ENCODE measurements at regions of chrX and their contacts with region 1.

Region 1: GRCh38 chrX:30981968-30982367 is 89.9 kb downstream of the FTHL17 start:
- DNase-seq: peak in 1 of 3 donors; percentile 35
- H3K4me3 ChIP-seq: no peak overlapping the region
- H3K4me3 Mint-ChIP-seq: peak overlapping the region; percentile 7 to 36
- H3K27ac ChIP-seq: no peak overlapping the region
- H3K27ac Mint-ChIP-seq: peak overlapping the region in 5 of 7 donors; percentile 5 to 79 (median 51)
- H3K4me1 ChIP-seq: peaks cover 10 to 19% of the 10 kb centered on the region in 2 donors
- H3K4me1 Mint-ChIP-seq: peaks cover 13% of the 10 kb centered on the region
- H3K27me3 ChIP-seq: no peaks in the 10 kb centered on the region
- H3K27me3 Mint-ChIP-seq: peaks cover 0 to 3% (median 3%) of the 10 kb centered on the region in 3 donors
- CTCF ChIP-seq: no peak

Region 2: DNA sequence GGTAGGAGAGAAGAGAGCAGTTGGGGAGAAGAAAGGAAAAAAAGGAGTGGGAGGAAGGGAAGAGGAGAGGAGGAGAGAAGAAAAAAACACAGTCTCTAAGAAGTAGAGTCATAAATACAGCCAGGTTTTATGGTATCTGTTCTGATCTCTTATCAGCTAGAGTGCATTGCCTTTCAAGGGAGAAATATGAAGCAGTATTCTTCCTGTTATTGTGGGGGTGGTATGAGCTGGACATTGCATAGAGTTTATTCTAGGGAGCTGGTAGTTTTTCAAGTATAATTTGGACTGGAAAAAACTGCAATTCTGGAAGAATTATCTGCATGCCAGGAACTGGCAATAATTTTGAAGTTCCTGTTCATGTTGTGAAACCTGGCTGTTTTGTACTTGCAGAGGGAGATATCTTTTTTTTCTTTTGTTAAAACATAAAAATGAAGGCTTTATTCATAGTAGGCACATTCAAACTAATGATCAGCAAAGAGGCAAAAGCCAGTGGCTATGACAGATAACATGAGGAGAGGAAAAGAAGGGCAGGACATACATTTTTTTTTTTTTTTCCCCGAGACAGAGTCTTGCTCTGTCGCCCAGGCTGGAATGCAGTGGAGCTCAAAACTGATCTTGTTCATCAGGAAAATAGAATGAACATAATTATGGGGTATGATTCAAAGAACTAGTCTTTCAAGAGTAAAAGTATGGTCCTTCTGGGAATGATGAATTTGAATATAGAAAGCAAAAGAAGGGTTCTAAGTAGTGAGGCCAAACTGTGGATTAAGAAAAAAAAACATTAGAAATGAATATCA is 37.8 kb before region 1 on chrX:
- intact Hi-C with region 1: no loop called
- DNase-seq: no peak
- H3K4me3 ChIP-seq: no peak overlapping the region
- H3K4me3 Mint-ChIP-seq: no peak overlapping the region
- H3K27ac ChIP-seq: no peak overlapping the region
- H3K27ac Mint-ChIP-seq: no peak overlapping the region
- H3K4me1 ChIP-seq: no peaks in the 10 kb centered on the region
- H3K4me1 Mint-ChIP-seq: no peaks in the 10 kb centered on the region
- H3K27me3 ChIP-seq: no peaks in the 10 kb centered on the region
- H3K27me3 Mint-ChIP-seq: no peaks in the 10 kb centered on the region
- CTCF ChIP-seq: no peak

Region 3: DNA sequence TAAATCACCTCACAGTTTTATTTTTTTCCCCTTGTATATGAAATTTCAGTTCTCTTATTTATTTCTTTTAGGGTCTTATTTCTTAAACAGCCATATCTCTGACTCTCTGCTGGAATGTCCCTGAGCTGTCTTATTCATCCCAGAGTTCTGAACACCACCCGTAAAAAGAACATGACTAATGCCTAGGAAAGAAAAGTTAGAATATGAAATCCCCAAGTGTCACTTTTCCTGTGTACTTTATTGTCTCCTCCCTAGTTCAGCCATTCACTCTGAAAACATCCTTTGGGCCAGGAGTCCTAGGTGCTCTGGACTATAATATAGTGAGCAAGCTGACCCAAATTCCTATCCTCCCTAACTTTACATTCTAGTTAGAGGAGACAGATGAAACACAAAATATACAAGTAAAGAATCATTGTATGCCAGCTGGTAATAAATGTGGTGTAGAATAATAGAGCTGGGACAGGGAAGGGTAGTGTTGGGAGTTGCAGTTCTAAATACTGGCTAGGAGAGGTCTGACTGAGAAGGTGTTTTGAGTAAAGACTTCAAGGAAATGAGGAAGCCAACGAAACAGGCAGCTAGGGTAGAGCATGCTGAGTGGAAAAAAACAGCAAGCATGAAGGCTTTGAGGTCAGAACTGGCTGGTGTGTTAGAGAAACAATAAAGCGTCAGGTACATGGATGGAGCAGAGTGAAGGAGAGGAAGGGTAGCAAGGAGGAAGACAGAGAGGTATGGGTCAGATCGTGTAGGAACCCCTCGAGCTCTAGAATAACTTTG is 130.4 kb after region 1 on chrX:
- intact Hi-C with region 1: loop called in 1 of 2 experiments (anchors 10 kb)
- DNase-seq: no peak
- H3K4me3 ChIP-seq: no peak overlapping the region
- H3K4me3 Mint-ChIP-seq: no peak overlapping the region
- H3K27ac ChIP-seq: no peak overlapping the region
- H3K27ac Mint-ChIP-seq: no peak overlapping the region
- H3K4me1 ChIP-seq: no peaks in the 10 kb centered on the region
- H3K4me1 Mint-ChIP-seq: no peaks in the 10 kb centered on the region
- H3K27me3 ChIP-seq: no peaks in the 10 kb centered on the region
- H3K27me3 Mint-ChIP-seq: peaks cover 2% of the 10 kb centered on the region in 3 donors
- CTCF ChIP-seq: no peak

Region 4: GRCh38 chrX:31445542-31445941 is 463.6 kb after region 1 on chrX:
- intact Hi-C with region 1: no loop called
- DNase-seq: no peak
- H3K4me3 ChIP-seq: no peak overlapping the region
- H3K4me3 Mint-ChIP-seq: no peak overlapping the region
- H3K27ac ChIP-seq: no peak overlapping the region
- H3K27ac Mint-ChIP-seq: no peak overlapping the region
- H3K4me1 ChIP-seq: no peaks in the 10 kb centered on the region
- H3K4me1 Mint-ChIP-seq: no peaks in the 10 kb centered on the region
- H3K27me3 ChIP-seq: no peaks in the 10 kb centered on the region
- H3K27me3 Mint-ChIP-seq: peaks cover 0 to 4% (median 0%) of the 10 kb centered on the region in 3 donors
- CTCF ChIP-seq: no peak

Measured in CD14-positive monocyte (primary cell).